Left ventricle myocardium inferior (tissue), 1 donor: ENCODE measurements at regions of chr7 and their contacts with region 1.

Region 1: GRCh38 chr7:97027427-97028234 is 3.0 kb upstream of the DLX5 start:
- DNase-seq: peak; percentile 62
- H3K4me3 ChIP-seq: peak overlapping the region; percentile 66
- H3K27ac ChIP-seq: no peak overlapping the region
- H3K4me1 ChIP-seq: peaks cover 46% of the 10 kb centered on the region
- H3K27me3 ChIP-seq: peaks cover 99% of the 10 kb centered on the region
- CTCF ChIP-seq: peak; percentile 88

Region 2: DNA sequence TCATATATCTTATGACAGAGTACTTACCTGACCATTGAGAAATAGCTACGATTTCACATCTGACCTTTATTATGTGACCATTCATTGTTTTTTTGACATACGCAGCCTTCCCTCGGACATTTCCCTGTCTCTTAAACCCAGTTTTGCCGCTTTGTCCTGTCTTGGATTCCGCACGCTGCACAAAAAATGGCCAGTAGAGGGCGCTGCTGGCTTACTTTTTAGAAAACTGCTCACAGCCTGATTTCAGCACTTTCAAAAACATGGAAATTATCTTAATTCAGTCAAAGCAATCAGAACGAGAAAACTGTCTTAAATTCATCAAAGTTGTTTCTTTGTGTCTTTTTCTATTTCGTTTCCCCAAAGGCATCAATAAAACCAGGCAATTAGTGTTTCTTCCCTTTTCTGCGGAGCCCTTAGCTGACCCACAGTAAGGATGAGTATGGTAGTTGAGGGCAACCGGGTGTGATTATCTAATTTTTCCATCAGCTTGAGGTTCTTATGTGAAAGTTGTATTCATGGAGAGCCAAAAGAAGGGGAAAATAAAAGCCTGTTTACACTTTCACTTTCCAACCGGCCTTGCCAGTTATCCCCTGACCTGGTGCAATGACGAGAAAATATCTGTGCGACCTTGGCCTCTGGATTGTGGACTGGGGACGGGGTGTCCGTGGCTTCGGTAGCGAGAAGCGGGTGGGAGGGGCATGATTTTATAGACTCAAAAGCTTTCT is 1110.9 kb before region 1 on chr7:
- intact Hi-C with region 1: loop called (anchors 10 kb)
- DNase-seq: peak; percentile 79
- H3K4me3 ChIP-seq: peak overlapping the region; percentile 9
- H3K27ac ChIP-seq: no peak overlapping the region
- H3K4me1 ChIP-seq: no peaks in the 10 kb centered on the region
- H3K27me3 ChIP-seq: no peaks in the 10 kb centered on the region
- CTCF ChIP-seq: peak; percentile 92

Region 3: GRCh38 chr7:96075510-96076349 is 951.9 kb before region 1 on chr7:
- intact Hi-C with region 1: loop called (anchors 5 kb)
- DNase-seq: peak; percentile 53
- H3K4me3 ChIP-seq: peak overlapping the region; percentile 67
- H3K27ac ChIP-seq: no peak overlapping the region
- H3K4me1 ChIP-seq: peaks cover 6% of the 10 kb centered on the region
- H3K27me3 ChIP-seq: peaks cover 6% of the 10 kb centered on the region
- CTCF ChIP-seq: peak; percentile 88